Aorta (tissue), 5 donors: ENCODE measurements at regions of chr18 and their contacts with region 1.

Region 1: DNA sequence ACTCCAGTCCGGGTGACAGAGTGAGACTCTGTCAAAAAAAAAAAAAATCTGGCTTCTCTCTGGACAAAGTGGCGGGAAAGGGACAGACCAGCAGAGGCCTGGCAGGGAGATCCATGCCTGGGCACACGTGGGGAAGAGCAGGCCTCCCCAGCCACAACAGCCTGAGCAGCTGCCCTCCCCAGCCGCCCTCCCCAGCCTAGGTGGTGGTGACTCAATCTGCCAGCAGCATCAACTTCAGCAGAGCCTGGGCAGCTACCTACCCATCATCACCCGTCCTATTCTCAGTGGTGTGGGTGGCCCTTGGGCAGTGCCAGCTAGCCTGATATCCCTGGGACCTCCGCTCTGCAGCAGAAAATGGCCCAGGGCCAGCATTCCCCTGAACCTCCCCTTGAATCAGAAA is 612.4 kb downstream of the FBXO15 start:
- DNase-seq: no peak
- ATAC-seq: peak; percentile 50
- H3K4me3 ChIP-seq: no peak overlapping the region
- H3K27ac ChIP-seq: no peak overlapping the region
- H3K4me1 ChIP-seq: no peaks in the 10 kb centered on the region
- H3K27me3 ChIP-seq: no peaks in the 10 kb centered on the region

Region 2: GRCh38 chr18:73597832-73598615 is 62.8 kb after region 1 on chr18:
- intact Hi-C with region 1: loop called in 1 of 2 experiments (anchors 10 kb)
- DNase-seq: no peak
- ATAC-seq: no peak
- H3K4me3 ChIP-seq: no peak overlapping the region
- H3K27ac ChIP-seq: no peak overlapping the region
- H3K4me1 ChIP-seq: no peaks in the 10 kb centered on the region
- H3K27me3 ChIP-seq: no peaks in the 10 kb centered on the region